Gastrocnemius medialis (tissue), 4 donors: ENCODE measurements at regions of chr20 and their contacts with region 1.

Region 1: DNA sequence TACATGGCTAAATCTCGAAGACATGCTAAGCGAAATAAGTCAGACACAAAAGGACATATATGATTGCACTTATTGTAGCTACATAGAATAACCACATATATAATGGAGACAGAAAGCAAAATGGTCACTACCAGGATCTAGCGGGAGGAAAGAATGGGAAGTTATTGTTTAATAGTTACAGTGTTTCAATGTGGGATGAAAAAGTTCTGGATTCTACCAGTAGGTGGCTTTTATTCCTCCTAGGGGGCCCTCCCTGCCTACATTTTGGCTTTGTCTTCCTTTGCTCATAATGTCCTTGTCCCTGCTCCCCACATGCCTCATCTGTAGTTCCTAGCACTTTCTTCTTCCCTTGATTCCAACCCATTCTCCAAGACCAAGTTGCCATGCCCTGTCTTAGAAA is 16.3 kb downstream of the ZNF133 start:
- DNase-seq: no peak
- ATAC-seq: no peak
- H3K4me3 ChIP-seq: no peak overlapping the region
- H3K27ac ChIP-seq: no peak overlapping the region
- H3K4me1 ChIP-seq: no peaks in the 10 kb centered on the region
- H3K27me3 ChIP-seq: no peaks in the 10 kb centered on the region
- CTCF ChIP-seq: no peak
- POLR2A ChIP-seq: no peak

Region 2: DNA sequence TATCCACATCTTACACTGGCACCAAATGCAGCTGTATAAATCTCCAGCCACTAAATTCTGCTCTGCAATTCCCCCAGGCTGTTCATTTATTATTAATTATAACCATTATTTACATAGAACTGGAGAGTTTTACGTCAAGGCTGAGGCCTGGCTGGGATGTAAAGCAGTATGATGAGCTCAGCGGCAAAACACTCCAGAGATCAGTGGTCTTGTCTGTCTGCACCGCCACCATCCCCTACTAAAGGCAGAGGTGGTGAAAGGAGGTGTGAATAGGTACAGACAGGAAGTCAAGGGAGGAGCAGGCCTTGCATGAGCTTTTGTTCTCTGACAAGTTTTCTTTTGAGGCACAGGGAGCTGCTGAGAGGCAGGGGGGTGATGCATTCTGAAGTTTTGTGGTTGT is 1237.7 kb before region 1 on chr20:
- in situ Hi-C with region 1: no loop called
- intact Hi-C with region 1: no loop called
- DNase-seq: no peak
- ATAC-seq: no peak
- H3K4me3 ChIP-seq: no peak overlapping the region
- H3K27ac ChIP-seq: no peak overlapping the region
- H3K4me1 ChIP-seq: no peaks in the 10 kb centered on the region
- H3K27me3 ChIP-seq: no peaks in the 10 kb centered on the region
- CTCF ChIP-seq: no peak
- POLR2A ChIP-seq: no peak

Region 3: GRCh38 chr20:18360635-18361034 is 56.0 kb after region 1 on chr20:
- in situ Hi-C with region 1: loop called in 1 of 4 experiments (anchors 10 kb)
- intact Hi-C with region 1: no loop called
- DNase-seq: no peak
- ATAC-seq: no peak
- H3K4me3 ChIP-seq: no peak overlapping the region
- H3K27ac ChIP-seq: no peak overlapping the region
- H3K4me1 ChIP-seq: no peaks in the 10 kb centered on the region
- H3K27me3 ChIP-seq: no peaks in the 10 kb centered on the region
- CTCF ChIP-seq: no peak
- POLR2A ChIP-seq: no peak